Activated CD4-positive, alpha-beta T cell treated with anti-CD3 and anti-CD28 coated beads for 36 hours (primary cell): ENCODE measurements at regions of chrX and their contacts with region 1.

Region 1: DNA sequence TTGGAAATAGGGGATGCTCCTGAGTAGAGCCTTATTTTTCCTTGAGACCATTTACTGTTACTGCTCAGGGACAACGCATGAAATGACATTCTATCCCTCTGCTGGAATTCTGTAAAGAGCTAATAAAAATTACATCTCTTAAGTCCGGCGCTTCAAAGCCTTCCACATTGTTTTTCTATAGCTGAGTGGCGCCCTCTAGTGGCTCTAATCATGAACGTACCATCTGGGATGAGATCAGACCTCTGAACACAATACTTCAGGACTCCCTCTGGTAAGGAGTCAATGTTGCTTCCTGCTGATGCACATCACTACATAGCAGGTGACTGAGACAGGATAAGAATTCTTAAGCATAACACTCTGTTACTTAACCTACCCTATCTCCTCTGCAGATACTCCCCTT is 6.0 kb downstream of the HMGN5 start:
- DNase-seq: peak; percentile 70
- ATAC-seq: peak; percentile 78
- H3K4me3 Mint-ChIP-seq: no peak overlapping the region
- H3K27ac Mint-ChIP-seq: no peak overlapping the region
- H3K4me1 Mint-ChIP-seq: peaks cover 3% of the 10 kb centered on the region
- H3K27me3 Mint-ChIP-seq: no peaks in the 10 kb centered on the region

Region 2: GRCh38 chrX:80876877-80877276 is 318.8 kb before region 1 on chrX:
- CTCF ChIA-PET with region 1: interaction called, 4 read pairs
- POLR2A ChIA-PET with region 1: no interaction called
- intact Hi-C with region 1: loop called (anchors 1 to 2 kb)
- DNase-seq: no peak
- ATAC-seq: no peak
- H3K4me3 Mint-ChIP-seq: no peak overlapping the region
- H3K27ac Mint-ChIP-seq: no peak overlapping the region
- H3K4me1 Mint-ChIP-seq: no peaks in the 10 kb centered on the region
- H3K27me3 Mint-ChIP-seq: no peaks in the 10 kb centered on the region

Region 3: GRCh38 chrX:81229229-81229628 is 33.5 kb after region 1 on chrX:
- CTCF ChIA-PET with region 1: no interaction called
- POLR2A ChIA-PET with region 1: no interaction called
- intact Hi-C with region 1: no loop called
- DNase-seq: no peak
- ATAC-seq: no peak
- H3K4me3 Mint-ChIP-seq: no peak overlapping the region
- H3K27ac Mint-ChIP-seq: no peak overlapping the region
- H3K4me1 Mint-ChIP-seq: peaks cover 13% of the 10 kb centered on the region
- H3K27me3 Mint-ChIP-seq: no peaks in the 10 kb centered on the region

Region 4: GRCh38 chrX:81336455-81337152 is 140.9 kb after region 1 on chrX:
- CTCF ChIA-PET with region 1: no interaction called
- POLR2A ChIA-PET with region 1: no interaction called
- intact Hi-C with region 1: no loop called
- DNase-seq: no peak
- ATAC-seq: no peak
- H3K4me3 Mint-ChIP-seq: no peak overlapping the region
- H3K27ac Mint-ChIP-seq: no peak overlapping the region
- H3K4me1 Mint-ChIP-seq: peaks cover 6% of the 10 kb centered on the region
- H3K27me3 Mint-ChIP-seq: no peaks in the 10 kb centered on the region